Upper lobe of right lung (tissue), 1 donor: ENCODE measurements at regions of chr18 and their contacts with region 1.

Region 1: DNA sequence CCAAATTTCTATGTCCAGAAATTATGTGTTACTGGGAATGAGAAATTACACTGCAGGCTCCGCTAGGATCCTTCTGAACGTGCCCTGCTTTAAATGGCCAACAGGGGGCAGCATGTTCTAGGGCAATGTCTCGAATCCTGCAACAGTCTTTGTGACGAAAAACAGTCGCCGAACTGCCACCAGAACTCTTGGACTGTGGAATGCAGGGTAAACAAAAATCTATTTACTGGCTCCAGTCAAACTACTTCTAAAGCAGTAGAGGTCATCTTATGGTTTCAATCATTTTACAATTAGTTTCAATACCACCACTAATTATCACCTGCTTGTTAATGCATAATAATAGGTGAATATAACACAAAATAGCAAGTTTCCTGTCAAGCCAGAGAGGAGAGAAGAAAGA is 9.8 kb upstream of the ZNF397 start:
- DNase-seq: peak; percentile 77
- ATAC-seq: peak; percentile 99
- H3K4me3 ChIP-seq: no peak overlapping the region
- H3K27ac ChIP-seq: no peak overlapping the region
- H3K4me1 ChIP-seq: no peaks in the 10 kb centered on the region
- H3K27me3 ChIP-seq: no peaks in the 10 kb centered on the region
- CTCF ChIP-seq: peak; percentile 98

Region 2: GRCh38 chr18:34921226-34921625 is 309.8 kb before region 1 on chr18:
- intact Hi-C with region 1: no loop called
- DNase-seq: no peak
- ATAC-seq: no peak
- H3K4me3 ChIP-seq: no peak overlapping the region
- H3K27ac ChIP-seq: no peak overlapping the region
- H3K4me1 ChIP-seq: no peaks in the 10 kb centered on the region
- H3K27me3 ChIP-seq: no peaks in the 10 kb centered on the region
- CTCF ChIP-seq: no peak

Region 3: GRCh38 chr18:35343936-35344735 is 113.1 kb after region 1 on chr18 and contains the start of gene ZNF24:
- intact Hi-C with region 1: loop called (anchors 10 kb)
- DNase-seq: peak; percentile 98
- ATAC-seq: peak; percentile 98
- H3K4me3 ChIP-seq: peak within 1 kb of the TSS; percentile 96
- H3K27ac ChIP-seq: peak within 1 kb of the TSS; percentile 100
- H3K4me1 ChIP-seq: peaks cover 23% of the 10 kb centered on the region
- H3K27me3 ChIP-seq: no peaks in the 10 kb centered on the region
- CTCF ChIP-seq: no peak
- total RNA-seq, gene ZNF24: 54.7 TPM